AG04449 (cell line): ENCODE measurements at regions of chr6 and their contacts with region 1.

Region 1: GRCh38 chr6:127464881-127465459 is 5.8 kb upstream of the KIAA0408 start:
- DNase-seq: no peak
- H3K4me3 ChIP-seq: no peak overlapping the region
- CTCF ChIP-seq: peak; percentile 78

Region 2: GRCh38 chr6:127441881-127442280 is 23.1 kb before region 1 on chr6:
- CTCF ChIA-PET with region 1: no interaction called
- POLR2A ChIA-PET with region 1: no interaction called
- DNase-seq: no peak
- H3K4me3 ChIP-seq: no peak overlapping the region
- CTCF ChIP-seq: no peak

Region 3: GRCh38 chr6:127484212-127484858 is 19.4 kb after region 1 on chr6:
- CTCF ChIA-PET with region 1: interaction called, 19 read pairs
- POLR2A ChIA-PET with region 1: no interaction called
- DNase-seq: no peak
- H3K4me3 ChIP-seq: no peak overlapping the region; the same call in 1 of the 2 replicates
- CTCF ChIP-seq: no peak

Region 4: GRCh38 chr6:127539272-127539671 is 74.3 kb after region 1 on chr6:
- CTCF ChIA-PET with region 1: interaction called, 112 read pairs
- POLR2A ChIA-PET with region 1: interaction called, 3 read pairs
- DNase-seq: no peak
- H3K4me3 ChIP-seq: no peak overlapping the region
- CTCF ChIP-seq: no peak

Region 5: DNA sequence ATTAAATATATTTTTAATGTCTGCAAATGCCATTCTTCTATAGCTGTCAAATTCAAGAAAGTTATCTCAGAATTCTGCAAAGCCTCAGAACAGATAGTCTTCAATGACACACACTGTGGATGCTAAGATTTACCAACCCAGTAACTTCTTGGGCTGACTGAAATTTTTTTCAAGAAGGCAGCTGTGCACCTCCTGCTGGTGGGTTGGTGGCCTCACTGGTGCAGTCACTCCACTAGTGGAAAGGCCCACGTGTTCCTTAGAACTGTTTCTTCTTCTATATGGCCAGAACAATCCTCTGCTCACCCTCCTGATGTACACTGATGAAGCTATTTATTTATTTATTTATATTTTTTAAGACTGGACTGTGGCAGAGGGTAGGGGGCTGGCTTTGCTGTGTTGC is 82.2 kb after region 1 on chr6:
- CTCF ChIA-PET with region 1: interaction called, 112 read pairs
- POLR2A ChIA-PET with region 1: no interaction called
- DNase-seq: no peak
- H3K4me3 ChIP-seq: no peak overlapping the region
- CTCF ChIP-seq: no peak